Naive thymus-derived CD4-positive, alpha-beta T cell (primary cell): ENCODE measurements at regions of chr6 and their contacts with region 1.

Region 1: GRCh38 chr6:39309942-39310531 is 4.2 kb downstream of the KCNK17 start:
- DNase-seq: peak in 8 of 9 donors; percentile 23 to 70 (median 31)
- ATAC-seq: peak; percentile 69
- H3K4me3 ChIP-seq: no peak overlapping the region
- H3K4me3 Mint-ChIP-seq: no peak overlapping the region
- H3K27ac ChIP-seq: no peak overlapping the region
- H3K27ac Mint-ChIP-seq: no peak overlapping the region
- H3K4me1 ChIP-seq: no peaks in the 10 kb centered on the region
- H3K4me1 Mint-ChIP-seq: peaks cover 0 to 7% (median 0%) of the 10 kb centered on the region in 7 donors
- H3K27me3 ChIP-seq: no peaks in the 10 kb centered on the region
- H3K27me3 Mint-ChIP-seq: peaks cover 21 to 43% (median 23%) of the 10 kb centered on the region in 5 donors

Region 2: DNA sequence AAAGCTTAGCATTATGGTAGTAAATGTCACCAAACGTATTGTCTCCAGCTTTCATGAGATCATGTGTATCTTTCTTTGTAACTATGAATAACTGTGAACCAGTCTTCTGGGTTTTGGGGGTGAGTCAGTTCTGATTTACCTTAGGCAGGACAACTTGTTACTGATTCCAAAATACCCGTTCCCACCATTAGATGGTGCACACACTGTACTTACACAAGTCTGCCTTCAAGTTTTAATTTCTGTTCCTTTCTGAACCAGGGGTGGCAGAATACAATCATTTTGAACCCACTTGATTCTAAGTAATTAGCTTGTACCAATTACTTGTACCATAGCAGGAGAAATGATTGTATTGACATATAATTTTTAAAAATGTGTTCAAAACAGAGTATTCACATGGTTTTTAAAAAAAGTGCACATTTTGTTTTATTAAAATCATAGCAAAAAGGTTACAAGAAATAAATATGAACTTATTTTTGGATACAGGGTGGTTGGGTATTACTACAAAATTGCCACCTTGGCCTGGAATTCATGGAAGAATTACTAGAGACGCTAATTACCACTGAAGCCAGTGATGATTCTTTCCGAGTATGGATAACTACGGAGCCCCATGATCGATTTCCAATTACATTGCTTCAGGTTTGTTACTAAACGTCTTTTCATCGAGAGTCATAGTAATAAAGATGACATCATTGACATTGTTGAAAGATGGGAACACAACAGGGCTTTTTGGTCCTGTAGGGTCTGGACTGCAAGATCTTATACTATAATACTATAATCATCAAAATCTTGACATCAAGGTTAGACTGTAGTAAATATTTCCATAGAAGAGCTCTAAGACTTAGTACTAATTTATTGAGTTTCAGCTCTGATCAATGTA is 336.6 kb before region 1 on chr6:
- CTCF ChIA-PET with region 1: interaction called, 5 read pairs
- POLR2A ChIA-PET with region 1: no interaction called
- intact Hi-C with region 1: loop called in 1 of 2 experiments (anchors 1 kb)
- DNase-seq: peak in 6 of 9 donors; percentile 22 to 36 (median 32)
- ATAC-seq: peak; percentile 77
- H3K4me3 ChIP-seq: no peak overlapping the region
- H3K4me3 Mint-ChIP-seq: no peak overlapping the region
- H3K27ac ChIP-seq: no peak overlapping the region
- H3K27ac Mint-ChIP-seq: no peak overlapping the region
- H3K4me1 ChIP-seq: no peaks in the 10 kb centered on the region
- H3K4me1 Mint-ChIP-seq: no peaks in the 10 kb centered on the region
- H3K27me3 ChIP-seq: peaks cover 0 to 3% of the 10 kb centered on the region in 2 donors
- H3K27me3 Mint-ChIP-seq: peaks cover 0 to 52% (median 18%) of the 10 kb centered on the region in 5 donors

Region 3: DNA sequence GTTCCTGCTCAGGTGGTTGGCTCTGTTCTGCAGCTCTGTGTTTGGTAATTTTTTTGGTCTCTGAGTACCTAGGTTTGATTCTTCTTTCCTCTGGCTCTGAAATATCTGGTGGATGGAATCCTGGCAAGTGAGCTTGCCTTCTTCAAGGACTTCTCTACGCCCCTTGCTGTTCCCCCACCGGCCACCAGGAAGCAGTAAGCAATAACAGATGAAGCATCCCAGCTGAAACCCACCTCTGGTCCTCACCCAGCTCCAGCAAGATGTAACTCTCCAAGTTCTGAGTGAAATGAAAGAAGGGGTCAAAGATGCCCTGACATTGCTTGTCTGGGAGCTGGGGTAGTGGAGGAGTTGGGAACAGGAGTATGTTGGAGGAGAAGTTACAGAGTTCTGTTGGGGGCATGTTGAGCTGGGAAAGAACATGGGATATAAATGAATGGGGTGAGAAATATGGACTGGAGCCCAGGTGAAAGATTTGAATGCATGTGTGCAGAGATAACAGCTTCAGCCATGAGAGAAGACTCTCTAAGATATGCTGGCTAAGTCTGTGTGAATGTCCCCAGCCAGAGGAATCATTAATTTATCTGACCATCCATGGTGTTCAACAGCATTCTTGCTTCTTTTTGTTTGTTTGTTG is 312.8 kb before region 1 on chr6:
- CTCF ChIA-PET with region 1: interaction called, 3 read pairs
- POLR2A ChIA-PET with region 1: no interaction called
- intact Hi-C with region 1: loop called in 1 of 2 experiments (anchors 1 kb)
- DNase-seq: peak in 5 of 9 donors; percentile 3 to 27 (median 18)
- ATAC-seq: no peak
- H3K4me3 ChIP-seq: no peak overlapping the region
- H3K4me3 Mint-ChIP-seq: no peak overlapping the region
- H3K27ac ChIP-seq: no peak overlapping the region
- H3K27ac Mint-ChIP-seq: peak overlapping the region in 1 of 9 donors; percentile 62
- H3K4me1 ChIP-seq: no peaks in the 10 kb centered on the region
- H3K4me1 Mint-ChIP-seq: no peaks in the 10 kb centered on the region
- H3K27me3 ChIP-seq: no peaks in the 10 kb centered on the region
- H3K27me3 Mint-ChIP-seq: peaks cover 42 to 60% (median 47%) of the 10 kb centered on the region in 5 donors

Region 4: GRCh38 chr6:39166189-39166911 is 143.7 kb before region 1 on chr6:
- CTCF ChIA-PET with region 1: interaction called, 6 read pairs
- POLR2A ChIA-PET with region 1: no interaction called
- intact Hi-C with region 1: loop called (anchors 1 kb)
- DNase-seq: peak; percentile 26 to 86 (median 66)
- ATAC-seq: peak; percentile 86
- H3K4me3 ChIP-seq: no peak overlapping the region
- H3K4me3 Mint-ChIP-seq: peak overlapping the region in 2 of 10 donors; percentile 34 to 44
- H3K27ac ChIP-seq: no peak overlapping the region
- H3K27ac Mint-ChIP-seq: no peak overlapping the region
- H3K4me1 ChIP-seq: peaks cover 0 to 3% of the 10 kb centered on the region in 2 donors
- H3K4me1 Mint-ChIP-seq: peaks cover 0 to 8% (median 5%) of the 10 kb centered on the region in 7 donors
- H3K27me3 ChIP-seq: no peaks in the 10 kb centered on the region
- H3K27me3 Mint-ChIP-seq: peaks cover 0 to 7% (median 4%) of the 10 kb centered on the region in 5 donors

Region 5: GRCh38 chr6:39298061-39298460 is 12.0 kb before region 1 on chr6:
- CTCF ChIA-PET with region 1: no interaction called
- POLR2A ChIA-PET with region 1: no interaction called
- intact Hi-C with region 1: no loop called
- DNase-seq: no peak
- ATAC-seq: no peak
- H3K4me3 ChIP-seq: no peak overlapping the region
- H3K4me3 Mint-ChIP-seq: no peak overlapping the region
- H3K27ac ChIP-seq: no peak overlapping the region
- H3K27ac Mint-ChIP-seq: no peak overlapping the region
- H3K4me1 ChIP-seq: no peaks in the 10 kb centered on the region
- H3K4me1 Mint-ChIP-seq: peaks cover 0 to 8% (median 2%) of the 10 kb centered on the region in 7 donors
- H3K27me3 ChIP-seq: no peaks in the 10 kb centered on the region
- H3K27me3 Mint-ChIP-seq: peaks cover 0 to 6% (median 0%) of the 10 kb centered on the region in 5 donors